ENCODE measurements at regions of chr1 and their contacts with region 1.

Region 1: DNA sequence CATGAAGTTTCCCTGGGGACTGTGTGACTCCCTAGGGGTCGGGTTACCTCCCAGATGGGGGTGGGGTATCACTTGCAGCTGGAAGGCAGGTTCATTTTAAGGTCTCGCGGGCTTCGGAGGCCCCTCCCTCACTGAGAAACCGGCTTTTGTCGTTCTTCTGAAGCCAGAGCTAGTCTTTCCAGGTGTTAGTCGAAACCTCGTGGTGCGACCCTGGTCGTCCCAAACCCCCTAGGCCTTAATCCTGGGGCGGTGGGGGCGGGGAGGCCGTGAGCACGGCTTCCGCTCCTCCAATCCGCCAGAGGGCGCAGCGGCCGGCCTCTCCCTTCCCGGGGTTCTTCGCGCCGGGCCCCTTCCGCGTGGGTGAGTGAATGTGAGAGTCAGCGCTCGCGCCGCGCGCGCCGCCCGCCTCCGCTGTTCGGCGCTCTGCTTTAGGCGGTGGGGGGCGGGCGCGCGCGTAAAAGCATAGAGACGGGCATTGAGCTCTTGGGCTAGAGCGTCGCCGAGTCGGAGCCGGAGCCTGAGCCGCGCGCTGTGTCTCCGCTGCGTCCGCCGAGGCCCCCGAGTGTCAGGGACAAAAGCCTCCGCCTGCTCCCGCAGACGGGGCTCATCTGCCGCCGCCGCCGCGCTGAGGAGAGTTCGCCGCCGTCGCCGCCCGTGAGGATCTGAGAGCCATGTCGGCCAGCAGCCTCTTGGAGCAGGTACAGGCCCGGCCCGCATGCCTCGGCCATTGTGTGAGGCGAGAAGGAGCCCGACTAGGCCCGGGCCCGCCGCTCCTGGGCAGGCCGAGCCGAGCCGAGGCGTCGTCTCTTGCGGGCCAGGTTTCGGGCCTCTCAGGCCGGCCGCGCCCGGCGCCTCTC is at the start of gene YTHDF2:
- DNase-seq: peak; percentile 99
- H3K4me3 Mint-ChIP-seq: peak within 1 kb of the TSS; percentile 100
- H3K27ac Mint-ChIP-seq: peak within 1 kb of the TSS; percentile 98
- H3K4me1 Mint-ChIP-seq: peaks cover 23% of the 10 kb centered on the region
- H3K27me3 Mint-ChIP-seq: no peaks in the 10 kb centered on the region
- total RNA-seq, gene YTHDF2: 90.8 and 92.6 TPM in 2 replicates

Region 2: GRCh38 chr1:28552758-28553663 is 183.7 kb before region 1 on chr1 and contains the start of gene TRNAU1AP:
- intact Hi-C with region 1: loop called (anchors 1 kb)
- DNase-seq: peak; percentile 99
- H3K4me3 Mint-ChIP-seq: peak within 1 kb of the TSS; percentile 100
- H3K27ac Mint-ChIP-seq: peak within 1 kb of the TSS; percentile 99
- H3K4me1 Mint-ChIP-seq: peaks cover 17% of the 10 kb centered on the region
- H3K27me3 Mint-ChIP-seq: no peaks in the 10 kb centered on the region
- total RNA-seq, gene TRNAU1AP: 47.5 and 50.7 TPM in 2 replicates

Region 3: GRCh38 chr1:28642847-28643635 is 93.6 kb before region 1 on chr1 and contains the start of gene TAF12:
- intact Hi-C with region 1: loop called (anchors 1 kb)
- DNase-seq: peak; percentile 96
- H3K4me3 Mint-ChIP-seq: peak within 1 kb of the TSS; percentile 98
- H3K27ac Mint-ChIP-seq: peak within 1 kb of the TSS; percentile 99
- H3K4me1 Mint-ChIP-seq: peaks cover 39% of the 10 kb centered on the region
- H3K27me3 Mint-ChIP-seq: no peaks in the 10 kb centered on the region
- total RNA-seq, gene TAF12: 31.7 and 33.8 TPM in 2 replicates

Region 4: GRCh38 chr1:28668191-28668955 is 68.3 kb before region 1 on chr1 and contains the start of gene GMEB1:
- intact Hi-C with region 1: loop called (anchors 1 kb)
- DNase-seq: peak; percentile 96
- H3K4me3 Mint-ChIP-seq: peak within 1 kb of the TSS; percentile 93
- H3K27ac Mint-ChIP-seq: peak within 1 kb of the TSS; percentile 98
- H3K4me1 Mint-ChIP-seq: peaks cover 10% of the 10 kb centered on the region
- H3K27me3 Mint-ChIP-seq: no peaks in the 10 kb centered on the region
- total RNA-seq, gene GMEB1: 26.1 and 26.3 TPM in 2 replicates

Region 5: GRCh38 chr1:28751315-28752060 is 14.8 kb after region 1 on chr1:
- intact Hi-C with region 1: no loop called
- DNase-seq: no peak
- H3K4me3 Mint-ChIP-seq: no peak overlapping the region
- H3K27ac Mint-ChIP-seq: no peak overlapping the region
- H3K4me1 Mint-ChIP-seq: peaks cover 31% of the 10 kb centered on the region
- H3K27me3 Mint-ChIP-seq: no peaks in the 10 kb centered on the region

Region 6: GRCh38 chr1:29181413-29182225 is 444.9 kb after region 1 on chr1 and contains the start of gene SRSF4:
- intact Hi-C with region 1: loop called (anchors 10 kb)
- DNase-seq: peak; percentile 100
- H3K4me3 Mint-ChIP-seq: peak within 1 kb of the TSS; percentile 96
- H3K27ac Mint-ChIP-seq: peak within 1 kb of the TSS; percentile 97
- H3K4me1 Mint-ChIP-seq: peaks cover 44% of the 10 kb centered on the region
- H3K27me3 Mint-ChIP-seq: no peaks in the 10 kb centered on the region
- total RNA-seq, gene SRSF4: 138 and 141 TPM in 2 replicates